ENCODE measurements at regions of chr3 and their contacts with region 1.

Region 1: DNA sequence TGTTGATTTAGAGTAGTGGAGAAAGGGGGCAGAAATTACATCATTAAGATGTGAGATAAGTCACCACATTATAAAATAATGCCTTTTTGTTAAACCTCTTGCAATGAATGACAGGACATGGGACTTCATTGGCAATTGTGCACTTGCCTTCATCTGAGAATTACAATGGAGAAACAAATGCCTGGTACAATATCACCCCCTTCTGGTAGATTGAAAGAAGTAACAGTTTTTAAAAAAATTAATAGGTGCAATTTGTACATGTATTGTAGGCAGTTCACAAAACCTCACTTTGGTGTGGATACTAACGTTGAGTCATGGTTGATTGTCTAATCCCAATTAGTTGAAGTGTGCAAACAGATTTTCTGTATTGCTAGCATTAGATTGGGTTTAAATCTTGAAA is 4.6 kb upstream of the P2RY14 start:
- DNase-seq: no peak
- ATAC-seq: peak; percentile 72

Region 2: GRCh38 chr3:151168269-151169094 is 114.4 kb before region 1 on chr3:
- intact Hi-C with region 1: loop called (anchors 2 kb)
- DNase-seq: peak; percentile 89
- ATAC-seq: peak; percentile 80

Region 3: DNA sequence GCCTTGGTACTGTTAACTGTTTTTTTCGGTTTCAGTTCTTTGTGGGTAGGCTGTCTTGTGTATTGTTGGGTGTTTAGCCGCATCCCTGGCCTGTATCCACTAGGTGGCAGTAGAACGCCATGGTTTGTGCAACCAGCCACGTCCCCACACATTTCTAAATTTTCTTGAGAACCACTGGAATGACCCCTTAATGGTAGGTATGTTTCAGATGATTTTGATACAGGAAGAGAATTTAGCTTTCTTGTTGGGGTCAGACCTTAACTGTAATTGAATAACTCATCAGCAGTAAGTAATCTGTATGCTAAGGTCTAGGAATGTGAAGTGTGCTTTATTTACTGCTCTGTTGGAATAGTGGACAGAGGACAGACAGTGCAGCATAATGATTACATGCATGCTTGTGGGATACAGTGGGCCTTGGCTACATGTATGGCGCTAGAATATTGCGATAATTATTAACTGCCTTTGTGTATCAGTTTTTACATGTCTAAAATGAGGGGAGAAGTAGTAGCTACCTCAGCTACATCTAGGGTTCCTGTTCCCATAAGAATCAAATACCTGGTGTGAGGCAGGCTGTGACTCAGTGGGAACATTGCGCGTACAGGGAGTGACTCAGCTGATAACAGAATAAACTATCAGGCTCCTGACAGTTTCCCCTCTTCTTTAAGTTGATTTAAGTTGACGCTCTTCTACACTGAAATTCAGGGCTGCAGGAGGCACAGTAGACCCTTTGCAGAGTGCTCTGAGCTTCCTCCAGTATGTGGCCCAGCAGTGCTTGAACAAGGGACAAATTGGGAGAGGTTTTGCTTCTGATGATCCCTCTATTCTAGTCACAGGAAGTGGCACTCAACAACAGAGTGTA is 54.9 kb before region 1 on chr3:
- intact Hi-C with region 1: loop called (anchors 2 kb)
- DNase-seq: peak; percentile 76
- ATAC-seq: peak; percentile 94

Region 4: DNA sequence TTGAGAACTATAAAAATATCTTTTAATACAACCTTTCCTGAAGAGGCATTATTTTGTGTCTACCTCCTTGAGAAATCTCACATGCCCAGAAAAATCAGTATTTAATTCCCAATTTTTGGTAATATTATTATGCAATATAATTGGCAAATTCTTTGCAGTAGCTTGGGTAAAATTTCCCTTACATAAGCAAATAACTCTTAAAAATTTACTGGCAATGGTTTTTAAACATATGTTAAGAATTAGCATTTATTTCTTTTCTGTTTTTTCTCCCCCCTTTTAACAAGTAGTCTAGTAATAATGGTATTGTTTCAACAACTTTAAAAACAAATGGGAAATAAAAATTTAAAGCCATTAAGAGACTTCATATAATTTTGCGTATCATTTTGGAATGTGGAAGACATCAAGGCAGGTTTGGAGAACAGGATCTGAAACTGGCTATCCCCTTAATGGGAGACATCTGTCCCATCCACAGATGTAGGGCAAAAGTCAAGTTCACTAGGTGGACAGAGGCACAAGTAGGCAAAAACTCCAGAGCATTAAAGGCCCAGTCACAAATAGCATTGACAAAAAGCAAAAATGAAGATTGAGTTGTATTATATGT is 361.2 kb after region 1 on chr3:
- intact Hi-C with region 1: no loop called
- DNase-seq: no peak
- ATAC-seq: no peak